Endothelial cell of umbilical vein (primary cell): ENCODE measurements at regions of chr9 and their contacts with region 1.

Region 1: DNA sequence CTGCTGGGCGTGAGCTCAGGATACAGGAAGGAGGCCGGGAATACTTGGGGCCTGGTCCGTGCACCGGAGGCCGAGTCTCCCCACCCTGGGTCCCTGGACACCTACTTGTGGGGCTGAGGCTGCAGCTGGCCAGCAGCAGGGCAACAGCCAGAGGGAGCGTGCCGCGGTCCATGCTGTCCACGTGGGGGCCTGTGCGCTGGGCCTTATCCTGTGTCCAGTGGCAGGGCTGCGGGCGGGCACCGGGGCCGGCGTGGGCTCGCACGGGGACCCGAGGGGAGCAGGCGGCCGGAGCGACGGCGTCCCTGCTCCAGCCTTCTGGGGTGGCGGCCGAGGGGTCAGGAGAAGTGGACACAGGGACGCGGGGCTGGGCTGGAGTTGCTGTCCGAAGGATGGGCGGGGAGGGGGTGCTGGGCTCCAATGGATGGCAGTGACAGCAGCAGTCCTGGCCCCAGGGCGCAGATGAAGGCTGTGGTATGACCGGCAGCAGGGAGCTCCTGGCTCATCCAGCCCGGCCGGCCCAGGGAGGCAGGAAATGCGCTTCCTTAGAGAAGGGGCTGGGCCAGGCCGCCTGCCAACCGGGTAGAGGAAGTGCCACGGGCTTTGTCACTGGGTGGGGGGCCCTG is at the start of gene ENG:
- DNase-seq: peak; percentile 63
- H3K4me3 ChIP-seq: peak within 1 kb of the TSS; percentile 81 to 99 (median 97)
- H3K27ac ChIP-seq: peak within 1 kb of the TSS; percentile 82
- H3K4me1 ChIP-seq: peaks cover 38% of the 10 kb centered on the region
- H3K27me3 ChIP-seq: no peaks in the 10 kb centered on the region
- CTCF ChIP-seq: peak in 1 of 2 donors; percentile 26
- POLR2A ChIP-seq: peak; percentile 98
- total RNA-seq, gene ENG: 688 and 728 TPM in 2 replicates

Region 2: GRCh38 chr9:127802576-127803443 is 51.5 kb before region 1 on chr9 and contains the start of gene FPGS:
- CTCF ChIA-PET with region 1: no interaction called
- POLR2A ChIA-PET with region 1: no interaction called
- dilution Hi-C with region 1: no loop called
- intact Hi-C with region 1: loop called (anchors 2 kb)
- DNase-seq: peak; percentile 86
- H3K4me3 ChIP-seq: peak within 1 kb of the TSS; percentile 71 to 80 (median 79)
- H3K27ac ChIP-seq: peak within 1 kb of the TSS; percentile 83
- H3K4me1 ChIP-seq: peaks cover 19% of the 10 kb centered on the region
- H3K27me3 ChIP-seq: no peaks in the 10 kb centered on the region
- CTCF ChIP-seq: peak in 1 of 2 donors; percentile 1
- POLR2A ChIP-seq: peak; percentile 69
- total RNA-seq, gene FPGS: 90.2 and 90.7 TPM in 2 replicates

Region 3: DNA sequence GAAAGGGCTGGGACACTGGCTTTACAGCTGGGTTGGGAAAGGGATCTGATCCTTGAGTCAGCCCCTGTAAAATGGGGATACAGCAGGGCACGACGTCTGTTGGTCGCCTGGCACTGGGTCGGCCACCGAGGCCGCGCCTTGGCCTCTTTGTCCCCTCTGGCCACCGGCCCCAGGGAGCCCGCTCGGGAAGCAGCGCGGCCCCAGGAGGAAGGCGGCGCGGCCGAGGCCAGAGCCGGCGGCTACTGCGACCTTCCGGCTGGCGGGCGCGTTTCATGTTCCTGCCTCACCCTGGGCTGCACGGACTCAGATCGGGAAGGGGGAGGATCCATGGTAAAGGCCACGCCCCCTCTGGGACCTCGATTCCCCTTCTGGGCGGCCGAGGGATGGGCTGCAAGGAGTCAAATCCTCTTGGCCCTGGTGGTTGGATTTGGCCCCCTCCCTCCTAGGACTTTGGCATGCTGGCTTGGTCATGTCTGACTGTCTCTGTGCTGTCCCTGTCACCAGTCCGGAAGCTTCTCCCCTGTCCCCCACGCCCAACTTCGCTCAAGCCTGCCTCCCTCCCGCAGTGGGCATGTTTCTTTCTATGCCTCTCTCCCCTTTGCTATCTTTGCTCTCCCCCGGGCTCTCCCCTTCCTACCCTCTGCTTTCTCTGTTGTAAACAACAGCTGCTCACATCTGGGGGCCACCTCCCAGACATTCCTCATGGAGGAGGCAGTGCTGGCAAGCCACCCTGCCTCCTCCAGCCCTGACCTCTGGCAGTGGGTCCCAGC is 25.8 kb before region 1 on chr9:
- CTCF ChIA-PET with region 1: interaction called, 12 read pairs
- POLR2A ChIA-PET with region 1: interaction called, 5 read pairs
- dilution Hi-C with region 1: no loop called
- intact Hi-C with region 1: no loop called
- DNase-seq: peak; percentile 79
- H3K4me3 ChIP-seq: no peak overlapping the region
- H3K27ac ChIP-seq: peak overlapping the region; percentile 81
- H3K4me1 ChIP-seq: peaks cover 44% of the 10 kb centered on the region
- H3K27me3 ChIP-seq: no peaks in the 10 kb centered on the region
- CTCF ChIP-seq: no peak
- POLR2A ChIP-seq: peak; percentile 64